KBM-7 (cell line): ENCODE measurements at regions of chr2 and their contacts with region 1.

Region 1: GRCh38 chr2:238784671-238785527 is 63.0 kb upstream of the TWIST2 start:
- DNase-seq: peak; percentile 52

Region 2: GRCh38 chr2:238370823-238371372 is 414.0 kb before region 1 on chr2:
- in situ Hi-C with region 1: loop called (anchors 25 kb)
- DNase-seq: peak; percentile 75

Region 3: GRCh38 chr2:239002954-239003588 is 218.2 kb after region 1 on chr2:
- in situ Hi-C with region 1: no loop called
- DNase-seq: no peak

Region 4: DNA sequence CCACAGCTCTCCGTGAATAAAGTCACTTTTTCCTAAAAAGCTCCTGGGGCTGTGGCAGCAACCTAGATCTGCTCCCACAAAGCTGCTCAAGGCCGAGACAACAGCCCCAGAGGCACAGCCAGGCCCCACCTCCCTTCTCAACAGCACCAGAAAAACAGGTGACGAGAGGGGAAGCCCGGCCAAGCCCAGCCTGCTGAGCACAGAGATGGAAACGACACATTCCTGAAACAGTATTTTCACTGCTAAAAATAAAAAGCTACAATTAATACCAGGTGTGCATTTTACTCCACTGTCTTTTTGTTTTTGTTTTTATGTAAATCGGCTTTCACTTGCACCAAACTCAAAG is 416.6 kb after region 1 on chr2:
- in situ Hi-C with region 1: no loop called
- DNase-seq: no peak